Naive thymus-derived CD4-positive, alpha-beta T cell (primary cell): ENCODE measurements at regions of chrX and their contacts with region 1.

Region 1: DNA sequence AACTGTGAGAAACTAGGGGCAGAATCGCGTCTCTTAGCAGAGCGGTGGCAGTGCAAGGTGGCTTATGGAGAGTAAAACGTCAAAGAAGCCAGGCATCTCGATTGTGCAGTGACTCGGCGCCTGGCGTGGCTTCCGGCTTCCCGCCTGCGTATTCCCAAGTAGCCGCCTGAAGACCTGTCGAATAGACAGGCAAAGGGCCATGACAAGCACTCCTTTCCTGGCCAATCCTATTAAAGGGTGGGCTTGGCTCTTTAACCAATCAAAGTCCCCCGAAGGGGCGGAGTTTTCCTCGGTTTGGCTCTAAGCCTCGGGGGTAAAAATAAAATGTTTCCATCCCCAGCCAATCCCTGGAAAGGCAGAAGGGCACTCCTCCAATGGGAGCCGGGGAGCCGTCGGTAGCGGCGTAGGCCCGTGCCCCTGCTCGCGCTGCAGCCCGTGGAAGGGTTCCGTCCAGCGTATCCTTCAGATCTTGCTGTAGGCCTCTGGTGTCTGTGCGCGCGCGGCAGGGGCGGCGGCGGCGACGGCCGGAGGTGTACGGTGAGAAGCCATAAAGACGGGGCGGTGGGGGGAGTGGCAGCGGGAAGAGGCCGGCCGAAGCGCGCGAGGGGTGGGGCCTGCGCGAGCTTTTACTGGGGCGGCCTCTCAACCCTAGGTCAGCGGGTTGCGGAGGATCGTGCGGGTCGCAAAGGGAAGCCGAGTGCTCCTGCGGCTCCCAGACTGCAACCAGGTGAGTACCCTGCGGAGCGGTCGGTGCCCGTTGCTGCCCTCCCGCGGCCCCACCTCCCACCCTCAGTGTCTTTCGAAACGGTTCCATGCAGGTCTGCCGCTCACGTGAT is at the start of gene KANTR:
- DNase-seq: peak; percentile 47 to 88 (median 83)
- ATAC-seq: peak; percentile 88
- H3K4me3 ChIP-seq: peak within 1 kb of the TSS; percentile 93
- H3K4me3 Mint-ChIP-seq: peak within 1 kb of the TSS; percentile 82 to 93 (median 88)
- H3K27ac ChIP-seq: peak within 1 kb of the TSS; percentile 73
- H3K27ac Mint-ChIP-seq: peak within 1 kb of the TSS; percentile 80 to 94 (median 91)
- H3K4me1 ChIP-seq: no peaks in the 10 kb centered on the region
- H3K4me1 Mint-ChIP-seq: peaks cover 9 to 27% (median 20%) of the 10 kb centered on the region in 7 donors
- H3K27me3 ChIP-seq: no peaks in the 10 kb centered on the region
- H3K27me3 Mint-ChIP-seq: no peaks in the 10 kb centered on the region
- total RNA-seq, gene KANTR: 12.5 to 29.9 (median 16.9) TPM

Region 2: DNA sequence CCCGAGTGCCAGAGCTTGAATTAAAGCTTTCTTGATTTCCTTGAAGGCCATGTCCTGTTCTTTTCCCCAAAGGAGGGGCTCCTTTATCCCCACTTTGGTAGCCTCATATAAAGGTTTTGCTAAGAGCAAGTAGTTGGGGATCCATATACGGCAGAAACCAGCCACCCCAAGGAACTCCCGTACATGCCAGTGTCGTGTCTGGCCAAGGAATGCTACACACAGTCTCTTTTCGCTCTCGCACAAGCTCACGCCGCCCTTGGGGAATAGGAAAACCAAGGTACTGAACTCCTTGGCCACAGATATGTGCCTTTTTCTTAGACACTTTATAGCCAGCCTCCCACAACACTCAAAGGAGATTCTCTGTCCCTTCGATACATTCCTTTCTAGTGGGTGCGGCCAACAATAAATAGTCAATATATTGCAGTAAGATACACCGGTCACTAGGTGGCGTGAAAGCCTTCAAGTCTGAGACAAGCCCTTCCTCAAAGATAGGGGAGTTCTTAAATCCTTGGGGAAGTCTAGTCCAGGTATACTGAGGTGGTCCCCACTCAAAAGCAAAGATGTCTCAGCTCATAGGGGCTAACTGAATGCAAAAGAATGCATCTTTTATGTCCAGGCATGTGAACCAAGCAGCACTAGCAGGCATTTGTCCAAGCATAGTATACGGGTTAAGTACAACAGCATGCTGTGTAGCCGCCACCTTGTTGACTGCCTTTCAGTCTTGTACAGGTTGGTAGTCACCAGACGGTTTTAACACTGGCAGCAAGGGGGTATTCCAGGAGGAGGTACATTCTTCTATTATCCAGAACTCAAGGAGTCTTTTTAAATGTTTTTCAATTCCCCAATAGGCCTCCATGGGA is 519.3 kb before region 1 on chrX:
- CTCF ChIA-PET with region 1: no interaction called
- POLR2A ChIA-PET with region 1: no interaction called
- intact Hi-C with region 1: loop called in 1 of 2 experiments (anchors 1 kb)
- DNase-seq: peak in 6 of 9 donors; percentile 5 to 40 (median 30)
- ATAC-seq: peak; percentile 57
- H3K4me3 ChIP-seq: no peak overlapping the region
- H3K4me3 Mint-ChIP-seq: no peak overlapping the region
- H3K27ac ChIP-seq: no peak overlapping the region
- H3K27ac Mint-ChIP-seq: no peak overlapping the region
- H3K4me1 ChIP-seq: no peaks in the 10 kb centered on the region
- H3K4me1 Mint-ChIP-seq: peaks cover 0 to 5% (median 0%) of the 10 kb centered on the region in 7 donors
- H3K27me3 ChIP-seq: no peaks in the 10 kb centered on the region
- H3K27me3 Mint-ChIP-seq: no peaks in the 10 kb centered on the region

Region 3: DNA sequence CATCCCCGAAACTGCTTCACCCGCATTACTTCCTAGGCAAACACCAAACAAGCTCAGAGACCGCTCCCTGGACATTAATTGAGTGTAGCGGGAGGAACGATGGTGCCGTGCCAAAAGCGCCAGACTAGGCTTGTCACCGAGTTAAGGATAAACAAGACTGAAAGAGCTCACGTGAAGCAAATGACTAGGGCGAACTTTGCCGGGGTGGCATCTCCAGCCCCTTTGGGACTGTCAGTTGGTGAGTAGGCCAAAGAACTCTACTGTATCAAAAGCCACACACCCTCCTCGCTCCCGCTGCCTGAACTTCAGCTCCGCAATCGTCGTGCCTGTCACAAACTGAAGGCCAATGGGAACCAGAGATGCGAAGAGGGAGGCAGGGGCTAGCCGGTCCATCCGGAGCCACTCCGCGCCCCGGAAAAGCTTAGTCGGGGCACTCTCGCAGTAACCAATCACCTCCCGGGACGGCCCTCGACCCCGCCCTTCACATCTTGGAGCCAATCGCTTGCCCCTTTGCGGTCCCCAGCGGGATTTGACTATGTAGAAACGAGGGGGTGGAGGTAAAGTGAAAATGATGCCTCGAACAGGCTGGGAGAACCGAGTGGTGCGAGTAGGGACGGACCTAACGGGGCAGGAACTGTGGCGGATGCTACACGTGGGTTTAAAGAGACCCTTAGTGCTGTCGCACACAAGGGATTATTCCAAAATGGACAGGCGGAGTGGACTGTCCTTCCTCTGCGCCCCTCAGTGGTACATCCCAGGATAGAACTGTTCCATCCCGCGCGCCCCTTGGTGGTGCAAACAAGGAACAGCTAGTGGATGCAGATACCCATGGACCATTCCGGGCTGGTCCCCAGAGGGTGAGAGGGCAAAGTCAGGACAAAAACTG is 98.6 kb before region 1 on chrX:
- CTCF ChIA-PET with region 1: no interaction called
- POLR2A ChIA-PET with region 1: no interaction called
- intact Hi-C with region 1: loop called (anchors 1 kb)
- DNase-seq: peak; percentile 67 to 94 (median 91)
- ATAC-seq: peak; percentile 98
- H3K4me3 ChIP-seq: peak overlapping the region; percentile 92
- H3K4me3 Mint-ChIP-seq: peak overlapping the region; percentile 84 to 98 (median 94)
- H3K27ac ChIP-seq: peak overlapping the region; percentile 84
- H3K27ac Mint-ChIP-seq: peak overlapping the region; percentile 97 to 100 (median 99)
- H3K4me1 ChIP-seq: peaks cover 7 to 12% of the 10 kb centered on the region in 2 donors
- H3K4me1 Mint-ChIP-seq: peaks cover 11 to 25% (median 19%) of the 10 kb centered on the region in 7 donors
- H3K27me3 ChIP-seq: no peaks in the 10 kb centered on the region
- H3K27me3 Mint-ChIP-seq: peaks cover 0 to under 1% (median 0%) of the 10 kb centered on the region in 5 donors

Region 4: GRCh38 chrX:53071604-53072417 is 22.2 kb before region 1 on chrX:
- CTCF ChIA-PET with region 1: interaction called, 21 read pairs
- POLR2A ChIA-PET with region 1: interaction called, 7 read pairs
- intact Hi-C with region 1: loop called (anchors 1 kb)
- DNase-seq: peak; percentile 34 to 85 (median 77)
- ATAC-seq: peak; percentile 95
- H3K4me3 ChIP-seq: peak overlapping the region; percentile 75
- H3K4me3 Mint-ChIP-seq: peak overlapping the region; percentile 81 to 94 (median 90)
- H3K27ac ChIP-seq: peak overlapping the region; percentile 49
- H3K27ac Mint-ChIP-seq: peak overlapping the region; percentile 76 to 96 (median 91)
- H3K4me1 ChIP-seq: peaks cover 0 to 7% of the 10 kb centered on the region in 2 donors
- H3K4me1 Mint-ChIP-seq: peaks cover 6 to 19% (median 17%) of the 10 kb centered on the region in 7 donors
- H3K27me3 ChIP-seq: no peaks in the 10 kb centered on the region
- H3K27me3 Mint-ChIP-seq: no peaks in the 10 kb centered on the region

Region 5: DNA sequence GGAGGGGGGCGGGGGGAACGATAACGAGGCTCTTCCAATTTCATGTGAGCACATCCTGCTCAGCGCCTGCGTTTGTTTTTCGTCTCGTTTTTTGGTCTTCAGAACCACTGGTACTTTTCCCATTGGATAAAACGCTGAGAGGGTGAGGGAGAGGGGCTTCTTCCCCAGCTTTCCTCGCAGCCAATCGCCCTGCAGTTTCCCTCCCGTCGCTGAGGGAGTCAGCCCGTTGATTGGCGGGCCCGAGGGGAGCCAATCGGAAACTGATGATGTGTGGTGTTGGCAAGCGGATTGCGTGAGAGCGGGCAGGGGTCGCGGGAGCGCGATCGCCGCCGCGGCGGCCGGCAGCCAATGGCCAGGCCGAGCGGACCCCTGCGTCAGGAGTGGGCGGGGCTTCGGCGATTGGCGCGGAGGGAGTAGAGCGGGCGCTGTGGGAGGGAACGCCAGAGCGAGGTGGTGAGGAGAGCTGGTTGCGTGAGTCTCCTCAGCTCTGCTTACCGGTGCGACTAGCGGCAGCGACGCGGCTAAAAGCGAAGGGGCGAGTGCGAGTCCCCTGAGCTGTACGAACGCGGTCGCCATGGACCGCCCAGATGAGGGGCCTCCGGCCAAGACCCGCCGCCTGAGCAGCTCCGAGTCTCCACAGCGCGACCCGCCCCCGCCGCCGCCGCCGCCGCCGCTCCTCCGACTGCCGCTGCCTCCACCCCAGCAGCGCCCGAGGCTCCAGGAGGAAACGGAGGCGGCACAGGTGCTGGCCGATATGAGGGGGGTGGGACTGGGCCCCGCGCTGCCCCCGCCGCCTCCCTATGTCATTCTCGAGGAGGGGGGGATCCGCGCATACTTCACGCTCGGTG is 11.8 kb before region 1 on chrX and contains the start of gene TSPYL2:
- CTCF ChIA-PET with region 1: no interaction called
- POLR2A ChIA-PET with region 1: interaction called, 6 read pairs
- intact Hi-C with region 1: loop called (anchors 1 kb)
- DNase-seq: peak; percentile 83 to 96 (median 93)
- ATAC-seq: peak; percentile 91
- H3K4me3 ChIP-seq: peak within 1 kb of the TSS; percentile 64
- H3K4me3 Mint-ChIP-seq: peak within 1 kb of the TSS; percentile 87 to 98 (median 92)
- H3K27ac ChIP-seq: peak within 1 kb of the TSS; percentile 85
- H3K27ac Mint-ChIP-seq: peak within 1 kb of the TSS; percentile 96 to 99 (median 97)
- H3K4me1 ChIP-seq: peaks cover 0 to 12% of the 10 kb centered on the region in 2 donors
- H3K4me1 Mint-ChIP-seq: peaks cover 25 to 47% (median 38%) of the 10 kb centered on the region in 7 donors
- H3K27me3 ChIP-seq: no peaks in the 10 kb centered on the region
- H3K27me3 Mint-ChIP-seq: peaks cover 0 to 3% (median 0%) of the 10 kb centered on the region in 5 donors
- total RNA-seq, gene TSPYL2: 23.4 to 239 (median 166) TPM

Region 6: GRCh38 chrX:53115550-53115874 is 21.5 kb after region 1 on chrX:
- CTCF ChIA-PET with region 1: no interaction called
- POLR2A ChIA-PET with region 1: no interaction called
- intact Hi-C with region 1: no loop called
- DNase-seq: no peak
- ATAC-seq: no peak
- H3K4me3 ChIP-seq: no peak overlapping the region
- H3K4me3 Mint-ChIP-seq: no peak overlapping the region
- H3K27ac ChIP-seq: no peak overlapping the region
- H3K27ac Mint-ChIP-seq: peak overlapping the region in 1 of 9 donors; percentile 49
- H3K4me1 ChIP-seq: no peaks in the 10 kb centered on the region
- H3K4me1 Mint-ChIP-seq: peaks cover 5 to 21% (median 10%) of the 10 kb centered on the region in 7 donors
- H3K27me3 ChIP-seq: no peaks in the 10 kb centered on the region
- H3K27me3 Mint-ChIP-seq: no peaks in the 10 kb centered on the region

Region 7: DNA sequence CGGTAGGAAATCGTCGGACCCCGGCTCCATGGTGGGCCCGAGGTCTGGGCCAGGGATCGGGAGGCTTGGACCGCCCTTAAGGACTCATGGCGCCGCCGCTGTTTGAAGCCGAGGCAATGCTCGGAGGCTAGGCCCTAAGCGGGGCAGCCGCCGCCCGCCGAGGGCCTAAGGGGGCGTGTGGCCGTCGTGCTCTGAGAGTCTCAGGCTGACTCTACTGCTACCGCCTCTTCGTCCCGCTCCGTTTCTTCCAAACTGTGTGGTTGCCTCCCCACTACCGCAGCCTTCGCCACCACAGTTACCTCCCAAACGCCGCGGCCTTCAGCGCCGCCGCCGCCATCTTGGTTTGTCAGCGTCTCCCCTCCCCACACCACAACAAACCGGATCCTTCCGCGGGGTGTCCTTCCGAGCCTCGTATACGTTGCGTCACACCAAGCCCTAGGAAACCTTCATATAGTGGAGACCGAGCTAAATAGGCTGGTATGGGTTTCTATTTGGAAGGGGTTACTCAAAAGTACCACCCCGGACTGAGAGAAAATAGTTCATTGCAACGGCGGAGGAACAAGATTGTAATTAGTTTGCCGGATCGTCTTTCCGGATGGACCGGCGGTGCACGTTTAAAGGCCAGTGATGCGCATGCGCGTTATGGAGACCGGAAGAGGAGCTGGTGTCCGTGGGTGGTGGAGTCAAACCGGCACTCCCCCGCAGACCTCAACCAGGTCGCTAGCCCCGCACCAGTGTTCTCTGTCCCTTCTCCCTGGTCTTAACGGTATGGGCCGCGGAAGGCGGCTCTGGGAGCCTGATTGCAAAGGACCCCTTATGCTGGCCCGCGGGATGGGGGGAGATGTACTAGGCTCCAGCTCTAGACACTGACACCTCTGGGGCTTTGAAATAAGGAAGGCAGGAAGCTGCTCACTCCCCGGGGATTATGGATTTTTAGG is 131.2 kb after region 1 on chrX and contains the start of gene KDM5C:
- CTCF ChIA-PET with region 1: no interaction called
- POLR2A ChIA-PET with region 1: no interaction called
- intact Hi-C with region 1: loop called (anchors 2 kb)
- DNase-seq: peak; percentile 65 to 97 (median 94)
- ATAC-seq: peak; percentile 88
- H3K4me3 ChIP-seq: peak within 1 kb of the TSS; percentile 94
- H3K4me3 Mint-ChIP-seq: peak within 1 kb of the TSS; percentile 93 to 100 (median 96)
- H3K27ac ChIP-seq: peak within 1 kb of the TSS; percentile 93
- H3K27ac Mint-ChIP-seq: peak within 1 kb of the TSS; percentile 96 to 100 (median 98)
- H3K4me1 ChIP-seq: peaks cover 25 to 27% of the 10 kb centered on the region in 2 donors
- H3K4me1 Mint-ChIP-seq: peaks cover 12 to 56% (median 40%) of the 10 kb centered on the region in 7 donors
- H3K27me3 ChIP-seq: no peaks in the 10 kb centered on the region
- H3K27me3 Mint-ChIP-seq: peaks cover 0 to 4% (median 0%) of the 10 kb centered on the region in 5 donors
- total RNA-seq, gene KDM5C: 104 to 216 (median 132) TPM

Region 8: DNA sequence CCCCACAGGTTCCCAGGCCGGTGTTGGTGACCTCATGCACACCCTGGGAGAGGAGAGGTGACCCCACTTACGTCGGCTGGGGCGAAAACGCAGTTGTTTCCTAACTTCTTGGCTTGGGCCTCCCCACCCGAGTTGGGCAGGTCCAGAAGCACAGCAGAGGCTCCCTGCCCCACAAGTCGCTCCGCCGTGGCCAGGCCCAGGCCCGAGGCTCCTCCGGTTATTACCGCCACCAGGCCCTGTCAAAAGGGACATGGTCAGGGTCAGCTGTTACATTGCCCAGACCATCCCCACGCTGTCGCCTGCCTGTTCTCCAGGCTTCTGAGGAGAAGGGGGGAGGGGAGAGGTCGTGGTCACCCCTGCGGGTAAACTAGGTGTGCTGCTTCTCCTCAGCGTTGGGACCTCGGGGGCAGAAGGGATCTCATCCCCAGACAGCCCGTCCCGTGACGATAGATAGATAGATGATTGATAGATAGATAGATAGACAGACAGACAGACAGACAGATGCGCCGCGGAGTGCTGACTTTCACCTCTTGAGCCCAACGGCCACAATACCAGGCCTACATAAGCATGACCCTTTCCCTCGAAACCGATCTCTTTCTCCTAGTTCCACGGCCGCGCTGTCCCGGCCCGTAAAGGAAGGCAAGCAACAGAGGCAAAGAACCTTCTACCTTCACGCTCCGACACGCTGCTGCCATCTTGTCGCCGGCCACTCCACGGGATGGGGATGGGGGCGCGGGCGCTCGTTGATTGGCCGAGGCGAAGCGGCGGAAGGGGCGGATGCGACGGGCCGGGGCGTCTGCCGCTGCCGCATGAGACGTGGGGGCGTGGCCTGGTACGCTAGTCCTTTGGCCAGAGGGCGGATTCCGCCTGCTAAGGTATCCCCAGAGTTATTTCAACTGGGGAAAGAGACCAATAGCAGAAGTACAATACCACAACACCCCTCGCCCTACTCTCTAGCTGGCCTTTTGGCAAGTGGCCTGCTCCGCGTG is 340.0 kb after region 1 on chrX and contains the start of gene HSD17B10:
- CTCF ChIA-PET with region 1: no interaction called
- POLR2A ChIA-PET with region 1: no interaction called
- intact Hi-C with region 1: loop called in 1 of 2 experiments (anchors 1 kb)
- DNase-seq: peak; percentile 70 to 84 (median 81)
- ATAC-seq: peak; percentile 99
- H3K4me3 ChIP-seq: peak within 1 kb of the TSS; percentile 76
- H3K4me3 Mint-ChIP-seq: peak within 1 kb of the TSS; percentile 83 to 99 (median 94)
- H3K27ac ChIP-seq: peak within 1 kb of the TSS; percentile 82
- H3K27ac Mint-ChIP-seq: peak within 1 kb of the TSS; percentile 85 to 99 (median 94)
- H3K4me1 ChIP-seq: peaks cover 0 to 11% of the 10 kb centered on the region in 2 donors
- H3K4me1 Mint-ChIP-seq: peaks cover 8 to 32% (median 15%) of the 10 kb centered on the region in 7 donors
- H3K27me3 ChIP-seq: no peaks in the 10 kb centered on the region
- H3K27me3 Mint-ChIP-seq: no peaks in the 10 kb centered on the region
- total RNA-seq, gene HSD17B10: 23.9 to 116 (median 38.6) TPM